ENCODE measurements at regions of chr7 and their contacts with region 1.

Region 1: DNA sequence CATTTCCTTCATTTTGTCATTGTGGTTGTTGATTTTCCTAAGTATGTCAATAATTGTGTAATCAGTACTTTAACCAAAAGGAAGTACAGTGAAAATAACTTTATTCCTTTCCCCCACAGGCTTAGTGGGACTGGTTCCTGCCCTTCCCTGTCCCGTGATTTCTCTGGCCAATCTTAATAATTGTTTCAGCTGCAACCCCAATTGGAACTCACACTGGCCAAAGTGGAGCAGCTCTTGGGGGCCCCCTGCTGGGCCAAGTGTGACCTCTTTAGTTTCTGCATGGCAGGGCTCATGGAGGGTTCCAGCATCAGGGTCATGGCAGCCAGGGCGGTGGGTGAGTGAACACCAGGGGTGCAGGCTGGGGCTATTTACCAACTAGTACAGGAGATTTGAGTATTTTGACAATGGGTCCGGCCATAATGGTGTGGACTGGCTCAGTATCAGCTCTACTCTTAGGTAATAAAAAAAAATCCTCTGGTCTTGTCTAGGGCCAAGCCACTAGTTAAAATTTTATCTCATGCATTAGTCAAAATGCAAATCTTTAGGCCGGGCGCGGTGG is 31.7 kb downstream of the CYCS start:
- DNase-seq: no peak
- ATAC-seq: peak; percentile 96
- H3K4me3 ChIP-seq: no peak overlapping the region
- H3K27ac ChIP-seq: no peak overlapping the region
- H3K4me1 ChIP-seq: peaks cover 4% of the 10 kb centered on the region
- H3K27me3 ChIP-seq: no peaks in the 10 kb centered on the region
- CTCF ChIP-seq: peak; percentile 84 to 90 (median 89)
- EP300 ChIP-seq: no peak
- POLR2A ChIP-seq: no peak
- RAD21 ChIP-seq: peak; percentile 90

Region 2: GRCh38 chr7:24401628-24402593 is 691.4 kb before region 1 on chr7:
- CTCF ChIA-PET with region 1: no interaction called
- POLR2A ChIA-PET with region 1: no interaction called
- RAD21 ChIA-PET with region 1: no interaction called
- SMC1A ChIA-PET with region 1: no interaction called
- in situ Hi-C with region 1: loop called (anchors 10 kb)
- intact Hi-C with region 1: loop called (anchors 10 kb)
- DNase-seq: no peak
- ATAC-seq: peak; percentile 81
- H3K4me3 ChIP-seq: no peak overlapping the region
- H3K27ac ChIP-seq: no peak overlapping the region
- H3K4me1 ChIP-seq: peaks cover 9% of the 10 kb centered on the region
- H3K27me3 ChIP-seq: no peaks in the 10 kb centered on the region
- CTCF ChIP-seq: peak; percentile 38 to 52 (median 50); a peak in 5 of 6 replicates
- EP300 ChIP-seq: no peak
- POLR2A ChIP-seq: no peak
- RAD21 ChIP-seq: peak; percentile 72

Region 3: GRCh38 chr7:24580283-24580946 is 512.9 kb before region 1 on chr7:
- CTCF ChIA-PET with region 1: interaction called, 12 read pairs
- POLR2A ChIA-PET with region 1: no interaction called
- RAD21 ChIA-PET with region 1: interaction called, 5 read pairs
- SMC1A ChIA-PET with region 1: interaction called, 6 read pairs
- in situ Hi-C with region 1: no loop called
- intact Hi-C with region 1: loop called (anchors 2 kb)
- DNase-seq: no peak
- ATAC-seq: peak; percentile 5; the same call in 1 of the 3 replicates
- H3K4me3 ChIP-seq: no peak overlapping the region
- H3K27ac ChIP-seq: no peak overlapping the region
- H3K4me1 ChIP-seq: peaks cover 7% of the 10 kb centered on the region
- H3K27me3 ChIP-seq: no peaks in the 10 kb centered on the region
- CTCF ChIP-seq: no peak
- EP300 ChIP-seq: no peak
- POLR2A ChIP-seq: no peak
- RAD21 ChIP-seq: no peak

Region 4: GRCh38 chr7:24836084-24836483 is 257.3 kb before region 1 on chr7:
- CTCF ChIA-PET with region 1: interaction called, 13 read pairs
- POLR2A ChIA-PET with region 1: no interaction called
- RAD21 ChIA-PET with region 1: interaction called, 3 read pairs
- SMC1A ChIA-PET with region 1: interaction called, 4 read pairs
- in situ Hi-C with region 1: no loop called
- intact Hi-C with region 1: no loop called
- DNase-seq: peak; percentile 76
- ATAC-seq: peak; percentile 85
- H3K4me3 ChIP-seq: 0 out of 2 replicates have a peak overlapping the region, but pooled peaks have one; percentile 9
- H3K27ac ChIP-seq: peak overlapping the region; percentile 29; the same call in 1 of the 2 replicates
- H3K4me1 ChIP-seq: peaks cover 48% of the 10 kb centered on the region
- H3K27me3 ChIP-seq: no peaks in the 10 kb centered on the region
- CTCF ChIP-seq: no peak
- EP300 ChIP-seq: peak; percentile 60 to 70; a peak in 3 of 4 replicates
- POLR2A ChIP-seq: no peak
- RAD21 ChIP-seq: no peak

Region 5: DNA sequence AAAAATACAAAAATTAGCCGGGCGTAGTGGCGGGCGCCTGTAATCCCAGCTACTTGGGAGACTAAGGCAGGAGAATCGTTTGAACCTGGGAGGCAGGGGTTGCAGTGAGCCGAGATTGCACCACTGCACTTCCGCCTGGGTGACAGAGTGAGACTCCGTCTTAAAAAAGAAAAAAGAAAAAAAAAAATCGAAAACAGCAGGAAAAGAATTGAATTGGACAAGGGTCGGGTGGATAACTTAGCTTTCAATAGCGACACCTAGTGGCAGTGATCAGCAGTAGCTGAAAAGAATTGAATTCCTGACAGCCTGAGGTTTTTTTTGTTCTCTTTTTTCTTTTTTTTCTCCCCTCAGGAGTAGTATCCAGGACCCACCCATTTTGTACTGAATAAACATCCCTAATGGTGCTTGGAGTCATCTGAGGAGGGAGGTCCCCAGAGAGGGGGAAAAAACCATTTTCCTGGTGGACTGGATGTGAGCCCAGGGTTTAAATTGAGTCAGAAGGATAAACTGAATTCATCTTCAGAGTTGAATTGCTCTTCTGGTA is 23.4 kb before region 1 on chr7:
- CTCF ChIA-PET with region 1: interaction called, 110 read pairs
- POLR2A ChIA-PET with region 1: interaction called, 4 read pairs
- RAD21 ChIA-PET with region 1: interaction called, 16 read pairs
- SMC1A ChIA-PET with region 1: interaction called, 34 read pairs
- in situ Hi-C with region 1: no loop called
- intact Hi-C with region 1: no loop called
- DNase-seq: no peak
- ATAC-seq: peak; percentile 79
- H3K4me3 ChIP-seq: no peak overlapping the region
- H3K27ac ChIP-seq: no peak overlapping the region
- H3K4me1 ChIP-seq: no peaks in the 10 kb centered on the region
- H3K27me3 ChIP-seq: no peaks in the 10 kb centered on the region; a peak in 1 of 4 replicates
- CTCF ChIP-seq: peak; percentile 72 to 82 (median 78)
- EP300 ChIP-seq: no peak
- POLR2A ChIP-seq: no peak
- RAD21 ChIP-seq: peak; percentile 86

Region 6: DNA sequence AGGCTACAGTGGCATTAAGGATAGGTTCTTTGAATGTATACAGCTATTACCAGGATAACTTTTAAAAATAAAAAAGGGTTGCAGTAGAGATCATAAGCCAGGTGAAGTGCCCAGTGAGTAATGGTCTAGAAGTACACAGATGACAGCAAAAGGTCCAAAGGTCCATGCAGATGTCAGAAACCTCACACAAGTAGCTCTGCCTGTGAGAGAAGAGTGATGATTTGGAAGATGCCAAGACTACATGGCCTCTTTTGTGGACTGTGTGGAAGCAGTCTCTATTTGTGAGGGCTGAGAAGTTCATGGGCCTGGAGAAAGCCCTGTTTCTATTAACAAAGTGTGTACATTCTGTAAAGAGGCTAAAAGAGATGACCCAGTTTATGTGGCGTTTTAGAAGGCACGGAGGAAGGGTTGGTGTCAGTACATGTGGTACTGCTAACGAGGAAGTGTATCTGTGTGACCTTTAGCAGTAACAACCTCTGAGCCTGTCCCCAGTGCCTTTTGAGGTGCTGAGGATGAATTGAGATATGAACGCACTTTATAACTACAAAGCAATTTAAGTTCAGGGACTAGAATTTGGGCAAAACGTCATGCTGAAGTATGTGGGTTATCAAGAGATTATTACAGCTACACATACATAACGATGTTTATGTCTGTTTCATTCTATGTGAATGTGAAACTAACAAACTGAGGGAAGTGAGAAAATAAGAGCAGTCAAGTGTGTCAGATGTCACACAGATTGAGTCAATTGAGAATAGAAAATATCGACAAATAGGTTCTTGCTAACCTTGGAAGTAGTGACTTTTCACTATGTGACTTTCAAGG is 24.1 kb after region 1 on chr7:
- CTCF ChIA-PET with region 1: interaction called, 46 read pairs
- POLR2A ChIA-PET with region 1: interaction called, 4 read pairs
- RAD21 ChIA-PET with region 1: interaction called, 9 read pairs
- SMC1A ChIA-PET with region 1: interaction called, 31 read pairs
- in situ Hi-C with region 1: no loop called
- intact Hi-C with region 1: no loop called
- DNase-seq: peak; percentile 91
- ATAC-seq: peak; percentile 87
- H3K4me3 ChIP-seq: peak overlapping the region; percentile 45
- H3K27ac ChIP-seq: peak overlapping the region; percentile 90
- H3K4me1 ChIP-seq: peaks cover 43% of the 10 kb centered on the region
- H3K27me3 ChIP-seq: no peaks in the 10 kb centered on the region
- CTCF ChIP-seq: no peak
- EP300 ChIP-seq: peak; percentile 79 to 92
- POLR2A ChIP-seq: peak; percentile 57; the same call in 1 of the 2 replicates
- RAD21 ChIP-seq: no peak

Region 7: DNA sequence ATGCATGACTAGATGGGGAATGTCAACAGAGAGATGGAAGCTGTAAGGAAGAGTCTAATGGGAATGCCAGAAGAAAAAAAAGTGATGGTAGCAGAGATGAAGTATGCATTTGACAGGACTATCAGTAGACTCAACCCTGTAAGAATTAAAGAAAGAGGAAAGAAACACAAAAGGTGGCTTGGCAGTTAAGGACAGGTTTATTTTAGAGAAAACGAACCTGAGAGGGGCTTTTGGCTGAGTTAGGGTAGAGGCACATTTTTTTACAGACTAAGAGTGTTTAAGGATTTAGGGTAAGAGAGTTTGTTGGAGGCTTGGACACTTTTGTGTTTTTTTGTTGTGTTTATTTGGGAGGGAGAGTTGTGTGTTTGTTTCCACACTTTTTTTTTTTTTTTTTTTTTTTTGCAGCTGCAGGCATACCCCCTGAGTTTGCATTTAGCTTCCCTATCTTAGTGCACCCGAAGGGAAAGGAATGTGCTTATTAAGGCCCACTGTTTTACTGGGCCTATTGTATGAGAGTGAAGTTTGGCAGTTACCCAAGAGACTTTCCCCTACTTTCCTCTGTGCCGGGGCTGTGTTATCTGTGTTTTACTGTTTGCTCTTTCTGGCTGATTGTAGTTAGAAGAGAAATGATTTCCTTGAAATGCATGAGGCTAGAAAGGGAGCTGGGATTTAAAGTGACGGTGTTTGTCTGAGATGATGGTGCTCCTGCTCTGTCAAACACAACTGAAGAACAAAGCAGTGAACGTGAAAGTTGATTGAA is 103.0 kb after region 1 on chr7:
- CTCF ChIA-PET with region 1: no interaction called
- POLR2A ChIA-PET with region 1: no interaction called
- RAD21 ChIA-PET with region 1: no interaction called
- SMC1A ChIA-PET with region 1: no interaction called
- in situ Hi-C with region 1: no loop called
- intact Hi-C with region 1: no loop called
- DNase-seq: no peak
- ATAC-seq: no peak
- H3K4me3 ChIP-seq: no peak overlapping the region
- H3K27ac ChIP-seq: no peak overlapping the region
- H3K4me1 ChIP-seq: no peaks in the 10 kb centered on the region
- H3K27me3 ChIP-seq: peaks cover 0 to 2% of the 10 kb centered on the region in 2 experiments; a peak in 1 of 4 replicates
- CTCF ChIP-seq: no peak
- EP300 ChIP-seq: no peak
- POLR2A ChIP-seq: no peak
- RAD21 ChIP-seq: no peak

Measured in GM12878 (cell line).